Vagina (tissue), 2 donors: ENCODE measurements at regions of chr10 and their contacts with region 1.

Region 1: DNA sequence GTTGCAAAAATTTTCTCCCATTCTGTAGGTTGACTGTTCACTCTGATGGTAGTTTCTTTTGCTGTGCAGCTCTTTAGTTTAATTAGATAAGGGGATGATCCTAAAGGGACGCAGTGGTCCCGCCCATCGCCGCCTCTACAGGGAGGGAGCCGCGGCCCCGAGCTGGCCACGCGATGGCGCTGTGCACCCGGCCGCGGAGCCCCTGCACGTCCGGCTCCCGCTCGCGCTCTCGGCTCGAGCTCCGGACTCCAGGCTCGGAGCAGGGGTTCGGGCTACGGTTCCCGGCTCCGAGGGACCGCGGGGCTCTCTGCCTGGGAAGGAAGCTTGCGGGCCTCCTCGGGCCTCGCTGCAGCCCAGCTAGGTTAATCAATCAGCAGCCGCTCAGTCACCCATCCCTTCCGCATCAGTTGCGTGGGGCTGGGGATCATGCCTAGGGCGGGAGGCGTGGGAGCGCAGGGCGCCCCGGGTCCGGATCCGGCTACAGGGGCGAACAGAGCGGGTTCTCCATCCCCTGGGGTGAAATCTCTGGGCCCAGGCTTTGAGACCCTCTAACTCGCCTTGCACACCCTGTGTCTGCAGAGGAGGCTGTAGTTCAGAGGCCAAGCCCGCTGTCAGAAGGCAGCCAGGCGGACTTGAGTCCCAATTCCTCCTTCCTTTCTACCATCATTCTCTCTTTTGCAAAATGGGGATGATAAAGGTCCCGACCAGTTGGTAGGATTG is 97.9 kb downstream of the WDR11 start:
- DNase-seq: peak in 1 of 2 donors; percentile 79
- H3K4me3 ChIP-seq: peak overlapping the region in 1 of 2 donors; percentile 19
- H3K27ac ChIP-seq: no peak overlapping the region
- H3K4me1 ChIP-seq: no peaks in the 10 kb centered on the region
- H3K27me3 ChIP-seq: no peaks in the 10 kb centered on the region
- CTCF ChIP-seq: peak; percentile 48 to 56 (median 54)
- POLR2A ChIP-seq: no peak

Region 2: DNA sequence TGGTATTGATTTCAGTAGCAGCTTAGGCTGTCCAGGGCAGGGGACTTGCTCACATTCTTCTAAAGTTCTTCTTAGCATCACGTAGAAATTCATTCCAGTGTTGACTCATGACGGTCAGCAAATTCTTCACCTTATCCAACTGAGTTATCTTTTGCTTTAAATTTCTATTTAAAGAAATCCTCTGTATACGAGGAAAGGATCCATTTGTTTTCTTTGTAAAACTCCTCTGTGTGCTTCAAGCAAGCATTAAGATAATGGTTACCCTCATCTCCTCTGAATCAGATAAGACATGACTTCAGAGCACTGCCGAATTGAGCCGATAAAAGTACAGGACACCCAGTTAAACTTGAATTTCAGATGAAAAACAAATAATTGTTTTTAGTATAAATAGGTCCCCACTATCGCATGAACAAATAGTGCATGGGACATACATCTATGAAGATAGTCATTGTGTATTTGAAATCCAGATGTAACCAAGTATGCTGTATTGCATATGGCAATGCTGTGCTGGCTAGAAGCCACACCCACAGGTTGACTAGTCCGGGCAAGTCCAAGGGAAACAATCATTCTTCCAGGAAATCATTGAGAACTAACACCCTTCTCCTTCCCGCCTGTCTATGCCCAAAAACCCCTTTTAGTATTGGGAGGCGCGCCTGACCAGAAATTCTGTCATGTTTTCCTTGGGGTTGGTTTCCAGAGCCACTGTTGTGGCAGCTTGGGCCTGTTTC is 661.7 kb after region 1 on chr10:
- intact Hi-C with region 1: loop called (anchors 5 kb)
- DNase-seq: no peak
- H3K4me3 ChIP-seq: no peak overlapping the region
- H3K27ac ChIP-seq: no peak overlapping the region
- H3K4me1 ChIP-seq: peaks cover 8% of the 10 kb centered on the region
- H3K27me3 ChIP-seq: no peaks in the 10 kb centered on the region
- CTCF ChIP-seq: no peak
- POLR2A ChIP-seq: no peak